ENCODE measurements at regions of chr5 and their contacts with region 1.

Region 1: GRCh38 chr5:135578685-135579341 is at the start of gene CXCL14:
- DNase-seq: no peak
- H3K4me3 ChIP-seq: peak within 1 kb of the TSS; percentile 50
- CTCF ChIP-seq: no peak

Region 2: DNA sequence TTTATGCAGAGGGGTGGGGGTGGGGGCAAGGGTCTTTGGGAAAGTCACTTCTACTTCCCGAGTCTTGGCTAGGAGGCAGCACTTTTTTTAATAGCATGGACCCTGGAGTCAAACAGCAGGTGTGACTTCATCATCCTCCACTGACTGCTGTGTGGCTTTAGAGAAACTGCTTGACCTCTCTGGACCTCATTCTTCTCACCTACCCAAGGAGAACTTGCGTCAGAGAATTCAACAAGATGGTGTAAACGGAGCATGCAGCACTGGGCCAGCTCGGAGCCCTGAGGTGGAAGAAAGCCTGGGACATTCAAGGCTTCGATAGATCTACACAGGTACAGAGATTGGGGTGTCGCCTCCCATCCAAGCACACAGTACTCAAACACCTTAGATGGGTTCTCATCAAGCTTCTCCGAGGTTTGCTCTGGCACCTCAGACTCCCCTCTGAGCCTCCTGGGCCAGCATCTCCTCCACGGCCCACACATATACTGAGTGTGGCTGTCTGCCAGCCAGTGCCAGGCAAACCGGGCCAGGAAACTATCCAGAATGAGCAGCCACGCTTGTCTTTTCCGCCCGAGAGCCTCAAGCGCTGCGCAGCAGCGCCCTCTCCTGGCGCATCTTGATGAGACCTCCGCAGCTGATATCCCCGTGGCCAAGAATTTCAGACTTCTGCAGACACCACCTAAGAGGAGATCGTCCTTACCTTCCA is 251.0 kb after region 1 on chr5:
- CTCF ChIA-PET with region 1: interaction called, 11 read pairs
- POLR2A ChIA-PET with region 1: no interaction called
- DNase-seq: no peak
- H3K4me3 ChIP-seq: no peak overlapping the region
- CTCF ChIP-seq: peak; percentile 72